CD4-positive, alpha-beta memory T cell (primary cell): ENCODE measurements at regions of chr18 and their contacts with region 1.

Region 1: DNA sequence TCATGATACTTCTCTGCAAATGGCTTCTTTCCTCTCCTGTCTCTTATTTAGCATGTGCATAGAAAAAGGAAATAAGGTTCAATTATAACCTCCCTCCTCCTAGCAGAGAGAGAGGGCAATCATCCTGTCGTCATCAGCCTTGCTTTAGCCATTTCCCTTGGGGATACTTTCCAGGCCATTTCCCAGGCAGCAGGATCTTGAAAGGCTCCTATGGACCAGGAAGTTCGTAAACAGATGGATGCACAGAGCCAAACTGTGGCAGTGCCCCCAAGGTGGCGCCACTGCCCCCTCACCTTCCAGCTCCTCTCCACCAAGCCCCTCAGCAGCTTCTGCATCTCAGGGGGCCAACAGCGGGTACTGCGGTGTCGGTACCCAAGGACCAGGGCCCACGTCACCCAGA is 157.4 kb downstream of the DTNA start:
- DNase-seq: no peak
- H3K4me3 ChIP-seq: no peak overlapping the region
- H3K4me3 Mint-ChIP-seq: no peak overlapping the region
- H3K27ac ChIP-seq: no peak overlapping the region
- H3K27ac Mint-ChIP-seq: no peak overlapping the region
- H3K4me1 ChIP-seq: no peaks in the 10 kb centered on the region
- H3K4me1 Mint-ChIP-seq: peaks cover 0 to 3% (median under 1%) of the 10 kb centered on the region in 4 donors
- H3K27me3 ChIP-seq: no peaks in the 10 kb centered on the region
- H3K27me3 Mint-ChIP-seq: peaks cover 0 to 2% of the 10 kb centered on the region in 2 donors

Region 2: GRCh38 chr18:35143622-35144596 is 276.4 kb after region 1 on chr18:
- CTCF ChIA-PET with region 1: no interaction called
- POLR2A ChIA-PET with region 1: no interaction called
- intact Hi-C with region 1: loop called (anchors 5 kb)
- DNase-seq: peak; percentile 22 to 48 (median 39)
- H3K4me3 ChIP-seq: no peak overlapping the region
- H3K4me3 Mint-ChIP-seq: no peak overlapping the region
- H3K27ac ChIP-seq: no peak overlapping the region
- H3K27ac Mint-ChIP-seq: peak overlapping the region in 2 of 7 donors; percentile 1 to 43
- H3K4me1 ChIP-seq: no peaks in the 10 kb centered on the region
- H3K4me1 Mint-ChIP-seq: peaks cover 0 to 1% (median 0%) of the 10 kb centered on the region in 4 donors
- H3K27me3 ChIP-seq: no peaks in the 10 kb centered on the region
- H3K27me3 Mint-ChIP-seq: no peaks in the 10 kb centered on the region

Region 3: GRCh38 chr18:35311476-35311875 is 444.0 kb after region 1 on chr18:
- CTCF ChIA-PET with region 1: no interaction called
- POLR2A ChIA-PET with region 1: no interaction called
- intact Hi-C with region 1: no loop called
- DNase-seq: no peak
- H3K4me3 ChIP-seq: no peak overlapping the region
- H3K4me3 Mint-ChIP-seq: peak overlapping the region in 1 of 8 donors; percentile 31
- H3K27ac ChIP-seq: no peak overlapping the region
- H3K27ac Mint-ChIP-seq: no peak overlapping the region
- H3K4me1 ChIP-seq: no peaks in the 10 kb centered on the region
- H3K4me1 Mint-ChIP-seq: no peaks in the 10 kb centered on the region
- H3K27me3 ChIP-seq: no peaks in the 10 kb centered on the region
- H3K27me3 Mint-ChIP-seq: no peaks in the 10 kb centered on the region